ENCODE measurements at regions of chr6 and their contacts with region 1.

Region 1: GRCh38 chr6:44086931-44087574 is 40.2 kb downstream of the MRPL14 start:
- DNase-seq: peak; percentile 82 to 90 (median 88)
- ATAC-seq: peak; percentile 81 to 90 (median 87)
- H3K4me3 ChIP-seq: no peak overlapping the region
- H3K27ac ChIP-seq: no peak overlapping the region
- H3K4me1 ChIP-seq: peaks cover 0 to 4% (median 0%) of the 10 kb centered on the region in 4 donors
- H3K27me3 ChIP-seq: no peaks in the 10 kb centered on the region
- CTCF ChIP-seq: peak in 1 of 4 donors; percentile 4
- POLR2A ChIP-seq: no peak

Region 2: GRCh38 chr6:43667245-43668150 is 419.6 kb before region 1 on chr6:
- intact Hi-C with region 1: loop called in 1 of 2 experiments (anchors 10 kb)
- DNase-seq: peak; percentile 81 to 83 (median 82)
- ATAC-seq: peak; percentile 80 to 95 (median 90)
- H3K4me3 ChIP-seq: no peak overlapping the region
- H3K27ac ChIP-seq: no peak overlapping the region
- H3K4me1 ChIP-seq: peaks cover 0 to 24% (median 3%) of the 10 kb centered on the region in 4 donors
- H3K27me3 ChIP-seq: no peaks in the 10 kb centered on the region
- CTCF ChIP-seq: peak; percentile 92 to 96 (median 95)
- POLR2A ChIP-seq: no peak

Region 3: DNA sequence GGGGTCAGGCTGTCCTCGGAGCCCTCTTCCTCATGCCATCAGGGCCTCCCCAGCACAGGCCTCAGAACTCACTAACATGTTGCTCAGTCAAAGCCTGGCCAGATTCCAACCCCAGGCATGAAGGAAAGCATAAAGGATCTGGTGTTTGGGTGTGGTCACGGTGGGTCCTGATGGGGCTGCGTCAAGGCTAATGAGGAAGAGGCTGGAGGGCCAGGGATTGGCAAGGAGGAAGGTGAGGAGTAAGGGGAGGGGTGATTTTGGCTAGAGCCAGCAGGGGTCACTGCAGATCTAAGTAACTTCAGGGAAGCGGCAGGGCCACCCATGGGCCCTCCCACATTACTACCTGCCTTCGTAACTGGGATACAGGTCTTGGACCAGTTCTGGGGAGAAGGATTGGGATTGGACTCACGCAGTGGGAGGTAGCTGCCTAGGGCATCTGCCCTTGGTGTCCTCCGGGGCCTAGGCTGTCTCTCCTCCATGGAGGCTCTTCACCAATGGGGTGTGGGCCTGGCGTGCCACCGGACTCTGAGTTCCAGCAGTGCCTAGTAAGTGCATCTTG is 363.2 kb before region 1 on chr6:
- intact Hi-C with region 1: loop called in 1 of 2 experiments (anchors 5 kb)
- DNase-seq: peak; percentile 74 to 79 (median 78)
- ATAC-seq: peak; percentile 93 to 95 (median 94)
- H3K4me3 ChIP-seq: no peak overlapping the region
- H3K27ac ChIP-seq: no peak overlapping the region
- H3K4me1 ChIP-seq: no peaks in the 10 kb centered on the region
- H3K27me3 ChIP-seq: no peaks in the 10 kb centered on the region
- CTCF ChIP-seq: peak; percentile 63 to 81 (median 73)
- POLR2A ChIP-seq: no peak

Measured in right lobe of liver (tissue), 6 donors.